Naive thymus-derived CD8-positive, alpha-beta T cell (primary cell): ENCODE measurements at regions of chr6 and their contacts with region 1.

Region 1: DNA sequence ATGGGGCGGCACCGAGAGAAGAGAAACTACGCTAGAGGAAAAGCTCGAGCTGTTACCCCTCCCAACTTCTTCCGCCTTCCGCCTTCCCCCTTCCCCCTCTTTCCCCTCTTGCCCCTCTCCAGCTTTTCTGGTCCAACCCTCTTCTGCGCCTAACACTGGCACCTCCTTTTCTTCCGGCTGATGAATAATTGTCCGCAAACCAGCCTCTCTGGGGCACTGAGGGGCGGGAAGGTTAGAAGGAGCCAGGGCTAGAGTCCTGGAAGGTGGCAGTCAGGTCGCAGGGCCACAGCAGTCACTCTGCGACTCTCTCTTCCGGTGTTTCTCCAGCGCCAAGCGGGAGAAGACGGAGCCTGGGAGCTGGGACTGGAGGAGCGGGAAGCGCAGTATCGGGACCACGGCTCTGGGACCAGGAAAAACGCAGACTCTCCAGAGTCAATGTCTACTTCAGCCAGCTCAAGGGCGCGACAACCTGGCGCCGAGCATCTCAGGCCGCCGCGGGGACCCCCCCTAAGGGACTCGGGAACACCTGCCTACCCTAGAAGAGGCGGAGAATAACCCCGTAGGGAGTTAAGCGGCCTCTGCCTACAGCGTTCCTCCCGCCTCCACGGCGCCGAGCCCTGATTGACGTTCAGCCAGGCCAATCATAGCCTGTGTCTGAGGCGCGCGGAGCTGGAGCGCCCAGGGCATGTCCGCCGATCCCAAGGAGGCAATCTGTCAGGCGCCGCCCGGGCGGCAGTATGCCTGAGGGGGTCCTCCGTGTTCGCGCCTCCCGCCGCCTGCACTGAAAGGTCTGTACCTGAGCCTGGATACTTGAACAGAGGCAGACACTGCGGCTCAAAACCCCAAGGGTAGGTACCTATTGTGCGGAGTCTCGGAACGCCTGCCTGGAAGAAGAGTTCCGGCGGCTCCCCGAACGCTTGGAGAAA is 40.4 kb downstream of the PSMB9 start:
- DNase-seq: peak; percentile 90 to 98 (median 94)
- ATAC-seq: peak; percentile 97 to 98
- H3K4me3 Mint-ChIP-seq: peak overlapping the region; percentile 97 to 100 (median 99)
- H3K27ac Mint-ChIP-seq: peak overlapping the region; percentile 93 to 98 (median 97)
- H3K4me1 Mint-ChIP-seq: peaks cover 21 to 56% (median 44%) of the 10 kb centered on the region in 4 donors
- H3K27me3 Mint-ChIP-seq: no peaks in the 10 kb centered on the region

Region 2: GRCh38 chr6:32838114-32838958 is 56.0 kb before region 1 on chr6 and contains the start of gene TAP2:
- POLR2A ChIA-PET with region 1: interaction called, 25 read pairs
- DNase-seq: peak; percentile 92 to 99 (median 97)
- ATAC-seq: peak; percentile 87 to 93
- H3K4me3 Mint-ChIP-seq: peak within 1 kb of the TSS; percentile 75 to 99 (median 94)
- H3K27ac Mint-ChIP-seq: peak within 1 kb of the TSS; percentile 84 to 100 (median 98)
- H3K4me1 Mint-ChIP-seq: peaks cover 46 to 92% (median 89%) of the 10 kb centered on the region in 4 donors
- H3K27me3 Mint-ChIP-seq: no peaks in the 10 kb centered on the region
- polyA plus RNA-seq, gene TAP2: 24.2 to 36.6 (median 25.3) TPM

Region 3: DNA sequence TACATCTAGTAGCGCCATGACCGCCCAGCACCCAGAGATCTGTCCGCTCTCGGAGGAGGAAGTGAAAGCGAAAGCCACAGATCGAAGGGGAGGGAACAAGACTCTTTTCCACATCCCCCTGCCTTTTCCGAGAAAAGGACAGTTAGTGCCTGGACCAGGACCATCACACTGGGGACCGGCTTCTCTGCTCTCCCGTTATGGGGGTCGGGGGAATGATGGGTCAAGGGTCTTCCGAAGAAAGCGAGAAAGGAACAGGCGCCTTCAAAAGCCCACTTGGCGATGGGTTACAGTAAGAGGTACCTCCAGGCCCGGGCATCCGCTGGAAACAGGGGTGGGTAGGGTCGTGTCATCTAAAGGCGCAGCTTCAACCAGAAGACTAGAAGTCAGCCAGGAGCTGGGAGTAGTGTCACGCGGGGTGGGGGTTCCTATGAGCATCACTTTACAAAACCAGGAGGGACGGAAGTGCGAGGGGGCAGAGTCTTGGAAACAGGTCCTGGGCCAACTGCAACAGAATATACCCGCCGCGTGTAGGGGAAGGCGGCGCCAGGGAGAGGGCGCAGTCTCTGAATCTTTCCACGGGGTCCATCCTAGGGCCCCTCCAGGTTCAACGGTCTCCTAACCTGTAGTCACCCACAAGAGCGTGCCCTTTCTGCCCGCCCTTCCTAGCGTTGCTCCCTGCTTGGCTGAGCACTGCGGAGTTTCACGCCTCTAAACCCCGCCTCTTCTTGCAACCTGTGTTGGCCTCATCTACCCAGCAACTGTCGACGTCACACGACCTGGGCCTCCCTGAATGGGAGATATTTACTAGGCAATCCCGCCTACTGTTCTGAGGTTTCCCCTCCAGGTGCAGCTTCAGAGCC is 50.1 kb before region 1 on chr6 and contains the start of gene PSMB8:
- POLR2A ChIA-PET with region 1: interaction called, 25 read pairs
- DNase-seq: peak; percentile 85 to 99 (median 98)
- ATAC-seq: peak; percentile 74 to 81
- H3K4me3 Mint-ChIP-seq: peak within 1 kb of the TSS; percentile 92 to 100 (median 98)
- H3K27ac Mint-ChIP-seq: peak within 1 kb of the TSS; percentile 98 to 100 (median 100)
- H3K4me1 Mint-ChIP-seq: peaks cover 54 to 90% (median 81%) of the 10 kb centered on the region in 4 donors
- H3K27me3 Mint-ChIP-seq: no peaks in the 10 kb centered on the region
- polyA plus RNA-seq, gene PSMB8: 350 to 386 (median 386) TPM

Region 4: DNA sequence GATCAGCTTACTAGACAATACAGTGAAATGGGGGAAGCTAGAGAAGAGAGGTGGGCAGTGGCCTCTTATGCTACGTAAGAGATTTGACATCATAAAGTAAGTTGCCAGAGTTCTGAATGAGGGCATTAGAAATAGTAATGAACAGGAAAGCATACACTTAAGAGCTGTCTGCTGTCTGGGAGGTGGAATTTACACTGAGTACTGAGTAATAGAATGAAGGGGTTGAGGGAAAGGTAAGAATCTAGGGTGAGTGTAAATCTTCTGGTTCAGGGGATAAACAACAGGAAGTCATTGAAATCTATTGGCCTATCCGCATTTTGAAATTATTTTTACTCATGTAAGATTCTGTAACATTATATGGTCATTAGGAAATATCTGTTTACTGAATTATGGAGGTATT is 10.7 kb after region 1 on chr6:
- POLR2A ChIA-PET with region 1: interaction called, 13 read pairs
- DNase-seq: no peak
- ATAC-seq: no peak
- H3K4me3 Mint-ChIP-seq: no peak overlapping the region
- H3K27ac Mint-ChIP-seq: peak overlapping the region in 1 of 10 donors; percentile 21
- H3K4me1 Mint-ChIP-seq: no peaks in the 10 kb centered on the region
- H3K27me3 Mint-ChIP-seq: no peaks in the 10 kb centered on the region

Region 5: DNA sequence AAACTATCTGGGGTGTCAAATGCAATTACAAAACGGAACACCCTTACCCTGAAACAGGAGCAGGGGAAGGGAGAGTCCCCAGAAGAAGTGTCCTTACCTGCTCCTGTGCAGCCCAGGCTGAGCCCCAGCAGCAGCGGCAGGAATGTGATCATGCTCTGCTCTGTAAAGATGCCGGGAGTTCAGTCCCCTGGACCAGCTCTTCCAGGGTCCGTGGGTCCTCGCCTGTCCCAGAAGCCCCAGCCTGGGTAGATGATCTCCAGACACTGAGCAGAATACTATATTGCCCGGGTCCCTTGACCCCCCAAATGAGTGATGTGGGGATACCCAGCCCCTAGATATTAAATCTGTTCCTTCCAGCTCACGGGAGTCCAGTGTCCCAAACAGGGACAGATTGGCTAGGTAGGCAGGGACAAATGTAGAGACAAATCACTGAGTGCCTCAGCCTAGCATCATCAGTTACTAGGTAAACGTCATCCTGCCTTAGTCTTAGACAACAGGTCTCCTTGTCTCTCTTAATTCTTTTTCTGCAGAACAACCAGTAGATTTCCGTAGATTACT is 46.4 kb after region 1 on chr6 and contains the start of gene HLA-DMB:
- POLR2A ChIA-PET with region 1: interaction called, 15 read pairs
- DNase-seq: peak in 9 of 10 donors; percentile 42 to 80 (median 63)
- ATAC-seq: peak; percentile 83 to 85
- H3K4me3 Mint-ChIP-seq: peak within 1 kb of the TSS; percentile 84 to 97 (median 94)
- H3K27ac Mint-ChIP-seq: peak within 1 kb of the TSS; percentile 88 to 98 (median 97)
- H3K4me1 Mint-ChIP-seq: peaks cover 43 to 92% (median 64%) of the 10 kb centered on the region in 4 donors
- H3K27me3 Mint-ChIP-seq: no peaks in the 10 kb centered on the region
- polyA plus RNA-seq, gene HLA-DMB: 10.8 to 22.5 (median 16.8) TPM

Region 6: GRCh38 chr6:32984605-32985389 is 90.5 kb after region 1 on chr6:
- POLR2A ChIA-PET with region 1: interaction called, 10 read pairs
- DNase-seq: peak; percentile 78 to 95 (median 87)
- ATAC-seq: peak; percentile 88 to 99
- H3K4me3 Mint-ChIP-seq: no peak overlapping the region
- H3K27ac Mint-ChIP-seq: peak overlapping the region in 9 of 10 donors; percentile 14 to 84 (median 67)
- H3K4me1 Mint-ChIP-seq: peaks cover 9 to 30% (median 25%) of the 10 kb centered on the region in 4 donors
- H3K27me3 Mint-ChIP-seq: no peaks in the 10 kb centered on the region